ENCODE measurements at regions of chr17 and their contacts with region 1.

Region 1: DNA sequence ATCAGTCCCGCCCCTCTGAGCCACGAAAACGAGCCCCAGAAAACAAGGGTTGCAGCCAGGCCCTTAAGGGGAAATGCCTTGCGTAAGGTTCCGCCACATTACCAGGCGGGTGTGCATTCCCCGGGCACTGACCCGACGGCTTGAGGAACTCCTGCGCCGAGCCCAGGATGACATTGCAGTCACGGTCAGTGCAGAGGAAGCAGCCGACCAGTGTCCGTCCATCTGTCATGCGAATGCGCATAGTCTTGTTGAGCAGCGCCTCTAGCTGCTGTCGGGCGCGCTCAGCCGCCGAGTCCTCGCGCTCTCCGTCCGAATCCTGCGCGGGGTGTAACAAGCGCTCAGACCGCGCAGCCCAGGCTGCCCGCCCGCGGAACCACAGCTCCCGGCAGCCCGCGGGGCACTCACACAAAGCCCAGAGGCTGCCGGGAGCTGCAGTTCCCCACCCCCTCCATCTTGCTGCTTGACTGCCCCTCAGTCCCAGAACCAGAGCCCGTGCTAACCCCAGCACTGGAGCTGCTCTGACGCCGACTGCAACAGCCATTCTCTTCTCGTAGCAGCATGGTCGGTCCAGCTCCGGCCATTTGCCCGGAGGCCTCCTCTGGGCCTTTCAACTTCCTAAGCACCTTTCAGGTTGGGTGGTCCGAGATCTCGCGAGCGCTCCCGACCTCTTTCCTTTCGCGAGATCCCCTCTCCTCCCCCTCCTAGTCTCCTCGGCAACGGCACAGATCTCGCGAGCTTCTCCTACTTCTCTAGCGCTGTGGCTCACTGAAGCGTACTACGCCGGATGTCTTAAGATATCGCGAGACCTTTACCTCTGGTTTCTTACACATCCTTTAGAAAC is at the start of gene NAA38:
- DNase-seq: peak; percentile 95 to 100
- ATAC-seq: peak; percentile 74 to 88
- H3K4me3 ChIP-seq: peak within 1 kb of the TSS; percentile 69
- H3K27ac ChIP-seq: peak within 1 kb of the TSS; percentile 91 to 98
- H3K4me1 ChIP-seq: peaks cover 23% of the 10 kb centered on the region
- CTCF ChIP-seq: peak; percentile 40
- EP300 ChIP-seq: no peak
- POLR2A ChIP-seq: peak; percentile 55
- RAD21 ChIP-seq: peak; percentile 32 to 56; a peak in 3 of 5 replicates
- polyA plus RNA-seq, gene NAA38: 98.9 and 102 TPM in 2 replicates

Region 2: GRCh38 chr17:7825206-7825990 is 31.7 kb before region 1 on chr17:
- CTCF ChIA-PET with region 1: interaction called, 677 read pairs
- POLR2A ChIA-PET with region 1: interaction called, 5 read pairs
- DNase-seq: peak; percentile 47 to 67
- ATAC-seq: peak; percentile 70 to 78
- H3K4me3 ChIP-seq: no peak overlapping the region
- H3K27ac ChIP-seq: no peak overlapping the region
- H3K4me1 ChIP-seq: no peaks in the 10 kb centered on the region; the same call in 2 of the 3 replicates
- CTCF ChIP-seq: no peak
- EP300 ChIP-seq: no peak
- POLR2A ChIP-seq: no peak
- RAD21 ChIP-seq: no peak

Region 3: GRCh38 chr17:7844292-7845154 is 12.6 kb before region 1 on chr17:
- CTCF ChIA-PET with region 1: interaction called, 677 read pairs
- POLR2A ChIA-PET with region 1: interaction called, 65 read pairs
- DNase-seq: peak; percentile 95 to 97
- ATAC-seq: peak; percentile 55 to 82
- H3K4me3 ChIP-seq: peak overlapping the region; percentile 80
- H3K27ac ChIP-seq: peak overlapping the region; percentile 96
- H3K4me1 ChIP-seq: peaks cover 28% of the 10 kb centered on the region
- CTCF ChIP-seq: no peak
- EP300 ChIP-seq: no peak
- POLR2A ChIP-seq: peak; percentile 40; the same call in 1 of the 2 replicates
- RAD21 ChIP-seq: no peak; a peak in 1 of 5 replicates

Region 4: GRCh38 chr17:7915611-7916382 is 58.7 kb after region 1 on chr17 and contains the start of gene RNF227:
- CTCF ChIA-PET with region 1: interaction called, 77 read pairs
- POLR2A ChIA-PET with region 1: interaction called, 10 read pairs
- DNase-seq: peak; percentile 62 to 94
- ATAC-seq: peak; percentile 77 to 80
- H3K4me3 ChIP-seq: peak within 1 kb of the TSS; percentile 48
- H3K27ac ChIP-seq: peak within 1 kb of the TSS; percentile 82 to 92
- H3K4me1 ChIP-seq: peaks cover 13% of the 10 kb centered on the region
- CTCF ChIP-seq: no peak
- EP300 ChIP-seq: no peak
- POLR2A ChIP-seq: peak; percentile 86
- RAD21 ChIP-seq: no peak
- polyA plus RNA-seq, gene RNF227: 2.1 and 2.4 TPM in 2 replicates

Region 5: DNA sequence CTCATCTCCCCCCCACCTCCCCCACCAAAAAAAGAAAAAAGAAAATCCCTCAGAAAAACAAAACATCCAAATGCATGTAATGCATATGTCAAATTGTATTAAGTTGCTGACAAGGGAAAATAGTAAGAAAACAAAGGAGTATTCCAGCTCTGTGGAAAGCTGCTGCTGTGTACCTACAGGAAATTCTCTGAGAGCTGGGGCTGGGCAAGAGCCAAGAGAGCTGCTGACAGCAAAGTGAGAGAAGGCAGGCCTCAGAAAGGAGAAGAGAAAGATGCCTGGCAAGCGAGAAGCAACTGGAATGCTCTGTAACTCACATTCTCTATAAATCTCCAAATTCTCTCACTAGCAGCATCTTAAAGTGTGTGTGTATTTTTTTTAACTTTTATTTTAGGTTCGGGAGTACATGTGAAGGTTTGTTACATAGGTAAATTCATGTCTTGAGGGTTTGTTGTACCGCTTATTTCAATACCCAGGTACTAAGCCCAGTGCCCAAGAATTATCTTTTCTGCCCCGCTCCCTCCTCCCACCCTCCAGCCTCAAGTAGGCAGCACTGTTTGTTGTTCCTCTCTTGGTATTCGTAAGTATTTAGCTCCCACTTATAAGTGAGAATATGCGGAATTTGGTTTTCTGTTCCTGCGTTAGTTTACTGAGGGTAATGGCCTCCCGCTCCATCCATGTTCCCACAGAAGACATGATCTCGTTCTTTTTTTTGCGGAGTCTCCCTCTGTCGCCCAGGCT is 99.3 kb after region 1 on chr17:
- CTCF ChIA-PET with region 1: no interaction called
- POLR2A ChIA-PET with region 1: no interaction called
- DNase-seq: no peak
- ATAC-seq: no peak
- H3K4me3 ChIP-seq: no peak overlapping the region
- H3K27ac ChIP-seq: no peak overlapping the region
- H3K4me1 ChIP-seq: no peaks in the 10 kb centered on the region
- CTCF ChIP-seq: no peak
- EP300 ChIP-seq: no peak
- POLR2A ChIP-seq: no peak
- RAD21 ChIP-seq: no peak

Region 6: DNA sequence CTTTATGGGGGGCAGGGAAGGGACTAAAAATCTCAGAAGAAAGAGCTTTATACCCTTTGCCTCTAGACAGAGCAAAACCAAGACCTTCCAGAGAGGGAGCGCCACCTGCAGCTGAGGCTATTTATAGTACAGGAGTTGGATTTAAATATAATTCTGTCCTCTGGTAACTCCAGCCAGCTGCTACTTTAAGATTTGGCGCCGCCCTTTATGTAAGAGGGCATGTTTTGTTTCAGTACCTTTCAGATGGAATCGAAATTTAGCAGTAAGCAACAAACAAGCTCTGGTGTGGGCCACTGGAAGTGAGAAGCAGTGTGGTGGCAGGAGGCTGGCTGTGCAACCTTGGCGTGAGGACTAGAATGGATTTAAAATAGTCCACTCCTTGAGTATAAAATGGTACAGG is 140.1 kb after region 1 on chr17:
- CTCF ChIA-PET with region 1: interaction called, 21 read pairs
- POLR2A ChIA-PET with region 1: no interaction called
- DNase-seq: peak; percentile 67 to 68
- ATAC-seq: peak; percentile 94 to 95
- H3K4me3 ChIP-seq: no peak overlapping the region
- H3K27ac ChIP-seq: no peak overlapping the region
- H3K4me1 ChIP-seq: no peaks in the 10 kb centered on the region
- CTCF ChIP-seq: peak; percentile 70
- EP300 ChIP-seq: no peak
- POLR2A ChIP-seq: no peak
- RAD21 ChIP-seq: peak; percentile 40 to 44; a peak in 3 of 5 replicates

Measured in A549 (cell line).